Activated CD4-positive, alpha-beta memory T cell treated with anti-CD3 and anti-CD28 coated beads, Interleukin-2, amount 10 ng/mL, durations not matched to agents 7 days and 5 days (primary cell): ENCODE measurements at regions of chrX and their contacts with region 1.

Region 1: GRCh38 chrX:71068049-71068763 is at the start of gene SNX12:
- DNase-seq: peak; percentile 91
- H3K4me3 Mint-ChIP-seq: peak within 1 kb of the TSS; percentile 98
- H3K27ac Mint-ChIP-seq: peak within 1 kb of the TSS; percentile 94
- H3K4me1 Mint-ChIP-seq: peaks cover 22% of the 10 kb centered on the region
- H3K27me3 Mint-ChIP-seq: peaks cover 3% of the 10 kb centered on the region
- total RNA-seq, gene SNX12: 43.2 to 43.5 TPM

Region 2: DNA sequence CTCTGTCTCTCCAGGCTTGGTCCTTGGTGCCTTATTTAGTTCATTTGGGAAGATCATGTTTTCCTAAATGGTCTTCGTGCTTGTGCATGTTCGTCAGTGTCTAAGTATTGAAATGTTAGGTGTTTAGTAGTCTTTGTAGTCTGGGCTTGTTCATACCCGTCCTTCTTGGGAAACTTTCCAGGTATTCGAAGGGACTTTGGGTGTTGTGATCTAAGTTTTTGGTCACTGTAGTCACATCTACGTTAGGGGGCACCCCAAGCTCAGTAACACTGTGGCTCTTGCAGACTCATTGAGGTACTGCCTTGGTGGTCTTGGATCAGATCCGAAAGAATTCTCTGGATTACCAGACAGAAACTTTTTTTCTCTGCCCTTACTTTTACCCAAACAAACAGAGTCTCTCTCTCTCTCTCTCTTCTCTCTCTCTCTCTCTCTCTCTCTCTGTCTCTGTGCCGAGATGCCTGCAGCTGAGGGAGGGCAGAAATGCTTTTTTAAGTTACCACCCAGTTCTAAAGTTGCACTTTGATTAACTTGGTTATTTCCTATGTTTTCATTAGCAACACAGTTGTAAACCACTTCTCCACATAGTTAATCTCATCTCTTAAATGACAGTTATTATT is 69.7 kb before region 1 on chrX:
- CTCF ChIA-PET with region 1: no interaction called
- POLR2A ChIA-PET with region 1: no interaction called
- DNase-seq: no peak
- H3K4me3 Mint-ChIP-seq: no peak overlapping the region
- H3K27ac Mint-ChIP-seq: no peak overlapping the region
- H3K4me1 Mint-ChIP-seq: peaks cover 5% of the 10 kb centered on the region
- H3K27me3 Mint-ChIP-seq: peaks cover 3% of the 10 kb centered on the region

Region 3: GRCh38 chrX:71032516-71032915 is 35.7 kb before region 1 on chrX:
- CTCF ChIA-PET with region 1: no interaction called
- POLR2A ChIA-PET with region 1: no interaction called
- DNase-seq: no peak
- H3K4me3 Mint-ChIP-seq: no peak overlapping the region
- H3K27ac Mint-ChIP-seq: no peak overlapping the region
- H3K4me1 Mint-ChIP-seq: no peaks in the 10 kb centered on the region
- H3K27me3 Mint-ChIP-seq: no peaks in the 10 kb centered on the region

Region 4: DNA sequence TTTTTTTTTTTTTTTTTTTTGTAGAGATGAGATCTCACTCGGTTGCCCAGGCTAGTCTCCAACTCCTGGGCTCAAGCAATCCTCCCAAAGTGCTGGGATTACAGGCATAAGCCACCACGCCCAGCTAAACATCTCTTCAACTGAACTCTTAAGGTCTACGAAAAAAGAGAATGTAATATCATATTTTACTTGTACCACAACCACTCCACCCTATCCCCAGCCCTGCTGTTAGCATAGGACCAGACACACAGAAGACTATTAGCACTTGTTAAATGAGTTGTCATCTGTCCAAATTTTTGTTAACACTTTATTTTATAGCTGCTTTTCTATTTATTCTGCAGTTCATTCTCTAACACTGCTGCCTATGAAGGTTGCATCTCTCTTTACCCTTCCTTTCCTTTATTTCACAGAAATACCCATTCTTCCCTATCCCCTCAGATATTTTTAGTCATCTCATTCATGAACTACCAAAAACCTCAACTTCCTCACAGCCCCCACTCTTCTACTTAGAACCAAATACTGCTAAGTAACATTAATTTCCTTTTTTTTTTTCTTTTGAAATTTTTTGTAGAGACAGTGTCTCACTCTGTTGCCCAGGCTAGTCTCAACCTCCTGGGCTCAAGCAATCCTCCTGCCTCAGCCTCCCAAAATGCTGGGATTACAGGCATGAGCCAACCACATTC is 10.2 kb before region 1 on chrX:
- CTCF ChIA-PET with region 1: no interaction called
- POLR2A ChIA-PET with region 1: interaction called, 17 read pairs
- DNase-seq: no peak
- H3K4me3 Mint-ChIP-seq: no peak overlapping the region
- H3K27ac Mint-ChIP-seq: peak overlapping the region; percentile 78
- H3K4me1 Mint-ChIP-seq: peaks cover 44% of the 10 kb centered on the region
- H3K27me3 Mint-ChIP-seq: no peaks in the 10 kb centered on the region

Region 5: GRCh38 chrX:71118032-71118984 is 50.1 kb after region 1 on chrX and contains the start of gene MED12:
- CTCF ChIA-PET with region 1: no interaction called
- POLR2A ChIA-PET with region 1: interaction called, 12 read pairs
- DNase-seq: peak; percentile 84
- H3K4me3 Mint-ChIP-seq: peak within 1 kb of the TSS; percentile 77
- H3K27ac Mint-ChIP-seq: peak within 1 kb of the TSS; percentile 78
- H3K4me1 Mint-ChIP-seq: peaks cover 28% of the 10 kb centered on the region
- H3K27me3 Mint-ChIP-seq: no peaks in the 10 kb centered on the region
- total RNA-seq, gene MED12: 56.5 to 61.3 TPM